Spleen (tissue), 13 donors: ENCODE measurements at regions of chr4 and their contacts with region 1.

Region 1: DNA sequence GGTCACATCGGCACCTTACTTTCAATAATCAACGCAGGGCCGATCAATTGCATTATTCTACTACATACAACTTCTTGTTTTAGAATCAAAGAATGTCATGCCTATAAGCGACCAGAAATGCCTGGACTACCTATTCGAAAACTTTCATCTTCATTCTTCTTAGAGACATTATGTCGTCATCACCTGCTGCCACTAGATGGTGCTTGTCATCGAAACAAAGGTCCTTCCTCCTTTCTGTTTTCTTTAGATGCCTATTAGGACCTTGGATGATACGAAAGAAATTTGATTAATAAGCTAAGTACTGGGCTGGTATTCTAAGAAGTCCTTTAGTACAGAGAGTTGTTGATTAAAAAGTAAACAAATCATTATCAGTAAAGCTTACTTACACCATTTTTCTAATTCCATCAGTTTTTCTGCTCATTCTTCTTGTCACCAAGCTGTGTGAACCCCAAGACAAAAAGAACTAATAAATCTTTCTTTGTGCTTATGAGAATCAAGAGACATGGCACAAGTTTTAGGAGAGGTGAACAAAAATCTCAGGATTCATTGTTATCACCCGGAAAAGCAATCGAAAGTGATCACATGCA is 154.5 kb upstream of the SLC4A4 start:
- DNase-seq: no peak
- H3K4me3 ChIP-seq: no peak overlapping the region
- H3K27ac ChIP-seq: no peak overlapping the region
- H3K4me1 ChIP-seq: peaks cover 8 to 42% (median 28%) of the 10 kb centered on the region in 6 donors
- H3K27me3 ChIP-seq: peaks cover 0 to 50% (median 24%) of the 10 kb centered on the region in 7 donors
- CTCF ChIP-seq: peak in 10 of 11 experiments; percentile 25 to 68 (median 56)
- POLR2A ChIP-seq: no peak

Region 2: DNA sequence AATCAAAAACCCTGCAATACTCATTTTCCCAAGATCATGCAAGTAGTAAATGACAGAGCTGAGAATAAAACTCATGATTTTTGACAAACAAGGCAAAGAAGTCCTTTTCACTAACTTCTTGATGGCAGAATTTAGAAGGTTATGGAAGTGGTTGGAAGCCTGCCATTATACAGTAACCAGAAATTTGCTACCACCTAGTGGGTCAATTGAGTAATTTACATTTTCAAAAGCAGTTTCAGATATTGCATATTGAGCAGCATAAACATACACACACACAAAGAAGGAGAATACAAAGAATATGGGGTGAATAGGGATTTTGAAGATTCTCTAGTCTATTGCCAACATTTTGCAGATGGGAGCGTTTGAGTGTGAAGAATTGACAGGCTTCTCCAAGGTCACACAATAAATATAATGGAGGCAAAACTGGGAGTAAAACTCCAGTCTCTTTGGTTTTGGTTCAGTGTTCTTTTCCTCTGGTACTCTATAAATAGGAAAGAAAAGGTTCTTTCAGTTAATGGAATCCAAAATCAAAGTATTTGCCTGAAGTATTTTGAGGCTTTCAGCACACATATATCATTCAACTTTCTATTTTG is 529.4 kb after region 1 on chr4:
- intact Hi-C with region 1: loop called (anchors 10 kb)
- DNase-seq: no peak
- H3K4me3 ChIP-seq: no peak overlapping the region
- H3K27ac ChIP-seq: no peak overlapping the region
- H3K4me1 ChIP-seq: no peaks in the 10 kb centered on the region
- H3K27me3 ChIP-seq: no peaks in the 10 kb centered on the region
- CTCF ChIP-seq: peak; percentile 28 to 73 (median 54)
- POLR2A ChIP-seq: no peak